ENCODE measurements at regions of chr4 and their contacts with region 1.

Region 1: DNA sequence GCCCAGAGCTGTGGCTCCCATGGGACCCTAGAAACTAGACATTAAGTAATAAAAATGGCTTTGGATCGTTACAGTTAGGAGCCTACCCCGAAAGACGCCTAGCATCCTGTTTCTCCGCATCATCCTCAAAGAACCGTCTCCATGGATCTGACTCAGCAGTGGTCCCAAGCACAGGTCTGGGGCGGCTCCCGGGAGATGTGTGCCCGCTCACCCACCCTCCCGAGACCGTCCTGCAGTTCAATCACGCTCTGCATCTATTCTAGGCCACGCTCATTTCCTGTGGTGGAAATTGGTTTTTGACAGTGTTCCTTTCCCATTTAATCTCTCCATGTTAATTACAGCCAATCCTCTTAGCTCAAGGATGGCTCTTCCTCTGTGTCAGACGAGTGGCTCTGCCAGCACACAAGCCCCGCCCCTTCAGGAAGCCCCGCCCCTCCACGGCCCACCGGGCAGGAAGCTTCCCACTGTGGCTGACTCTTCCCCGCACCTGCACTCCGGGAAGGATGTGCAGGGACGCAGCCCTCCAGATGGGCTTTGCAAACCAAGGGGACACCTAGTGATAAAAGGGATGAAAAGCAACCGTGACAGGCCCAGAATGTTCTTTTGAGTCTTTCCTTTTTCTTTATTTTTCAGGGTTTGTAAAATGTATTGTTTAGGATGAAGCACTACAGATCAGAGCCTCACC is 34.5 kb upstream of the HELT start:
- DNase-seq: peak; percentile 42 to 62 (median 52)
- ATAC-seq: peak; percentile 63
- H3K4me3 ChIP-seq: no peak overlapping the region
- H3K27ac ChIP-seq: no peak overlapping the region
- H3K4me1 ChIP-seq: peaks cover 4% of the 10 kb centered on the region
- H3K27me3 ChIP-seq: no peaks in the 10 kb centered on the region
- CTCF ChIP-seq: peak in 5 of 7 experiments; percentile 7 to 42 (median 37)
- POLR2A ChIP-seq: no peak

Region 2: GRCh38 chr4:184745831-184746795 is 237.7 kb before region 1 on chr4:
- intact Hi-C with region 1: loop called (anchors 5 kb)
- DNase-seq: peak; percentile 82 to 90 (median 84)
- ATAC-seq: peak; percentile 87
- H3K4me3 ChIP-seq: no peak overlapping the region
- H3K27ac ChIP-seq: peak overlapping the region; percentile 79 to 90 (median 88)
- H3K4me1 ChIP-seq: peaks cover 38% of the 10 kb centered on the region
- H3K27me3 ChIP-seq: no peaks in the 10 kb centered on the region
- CTCF ChIP-seq: peak; percentile 38 to 87 (median 82)
- POLR2A ChIP-seq: peak in 2 of 3 donors; percentile 23 to 35

Region 3: GRCh38 chr4:185082561-185082960 is 98.7 kb after region 1 on chr4:
- intact Hi-C with region 1: no loop called
- DNase-seq: peak in 1 of 4 donors; percentile 5
- ATAC-seq: no peak
- H3K4me3 ChIP-seq: no peak overlapping the region
- H3K27ac ChIP-seq: no peak overlapping the region
- H3K4me1 ChIP-seq: no peaks in the 10 kb centered on the region
- H3K27me3 ChIP-seq: no peaks in the 10 kb centered on the region
- CTCF ChIP-seq: no peak
- POLR2A ChIP-seq: no peak

Measured in body of pancreas (tissue), 4 donors.